AG04450 (cell line): ENCODE measurements at regions of chr5 and their contacts with region 1.

Region 1: DNA sequence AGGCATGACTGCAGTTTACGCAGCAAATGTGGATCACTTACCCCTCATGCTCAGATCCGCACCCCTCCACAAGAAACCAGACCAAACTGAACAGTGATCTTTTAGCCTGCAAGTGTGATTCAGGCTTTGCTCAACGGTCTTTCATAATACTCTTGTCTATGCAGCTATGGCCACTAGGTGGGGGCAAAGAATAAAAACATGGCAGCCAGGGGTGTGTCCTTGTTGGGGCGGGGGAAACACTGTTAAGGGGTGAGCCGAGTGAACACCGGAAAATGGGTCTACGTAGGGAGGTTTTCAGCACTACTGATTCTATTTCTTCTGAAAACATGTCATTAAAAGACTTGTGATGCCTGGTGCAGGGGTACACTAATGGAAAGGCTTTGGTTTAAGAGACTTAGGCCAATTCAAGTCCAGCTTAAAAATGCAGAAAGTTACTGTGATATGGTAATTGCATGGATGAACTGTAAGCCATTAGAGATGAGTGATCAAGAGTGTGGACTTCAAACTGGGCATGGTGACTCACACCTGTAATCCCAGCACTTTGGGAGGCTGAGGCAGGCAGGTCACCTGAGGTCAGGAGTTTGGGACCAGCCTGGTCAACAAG is 49.9 kb upstream of the GPR151 start:
- DNase-seq: peak; percentile 3
- H3K4me3 ChIP-seq: no peak overlapping the region
- H3K27ac ChIP-seq: no peak overlapping the region
- H3K27me3 ChIP-seq: no peaks in the 10 kb centered on the region
- CTCF ChIP-seq: peak; percentile 64

Region 2: GRCh38 chr5:146965761-146966659 is 400.1 kb after region 1 on chr5:
- CTCF ChIA-PET with region 1: interaction called, 11 read pairs
- POLR2A ChIA-PET with region 1: no interaction called
- DNase-seq: peak; percentile 33
- H3K4me3 ChIP-seq: no peak overlapping the region
- H3K27ac ChIP-seq: no peak overlapping the region
- H3K27me3 ChIP-seq: no peaks in the 10 kb centered on the region
- CTCF ChIP-seq: peak; percentile 74